ENCODE measurements at regions of chr4 and their contacts with region 1.

Region 1: DNA sequence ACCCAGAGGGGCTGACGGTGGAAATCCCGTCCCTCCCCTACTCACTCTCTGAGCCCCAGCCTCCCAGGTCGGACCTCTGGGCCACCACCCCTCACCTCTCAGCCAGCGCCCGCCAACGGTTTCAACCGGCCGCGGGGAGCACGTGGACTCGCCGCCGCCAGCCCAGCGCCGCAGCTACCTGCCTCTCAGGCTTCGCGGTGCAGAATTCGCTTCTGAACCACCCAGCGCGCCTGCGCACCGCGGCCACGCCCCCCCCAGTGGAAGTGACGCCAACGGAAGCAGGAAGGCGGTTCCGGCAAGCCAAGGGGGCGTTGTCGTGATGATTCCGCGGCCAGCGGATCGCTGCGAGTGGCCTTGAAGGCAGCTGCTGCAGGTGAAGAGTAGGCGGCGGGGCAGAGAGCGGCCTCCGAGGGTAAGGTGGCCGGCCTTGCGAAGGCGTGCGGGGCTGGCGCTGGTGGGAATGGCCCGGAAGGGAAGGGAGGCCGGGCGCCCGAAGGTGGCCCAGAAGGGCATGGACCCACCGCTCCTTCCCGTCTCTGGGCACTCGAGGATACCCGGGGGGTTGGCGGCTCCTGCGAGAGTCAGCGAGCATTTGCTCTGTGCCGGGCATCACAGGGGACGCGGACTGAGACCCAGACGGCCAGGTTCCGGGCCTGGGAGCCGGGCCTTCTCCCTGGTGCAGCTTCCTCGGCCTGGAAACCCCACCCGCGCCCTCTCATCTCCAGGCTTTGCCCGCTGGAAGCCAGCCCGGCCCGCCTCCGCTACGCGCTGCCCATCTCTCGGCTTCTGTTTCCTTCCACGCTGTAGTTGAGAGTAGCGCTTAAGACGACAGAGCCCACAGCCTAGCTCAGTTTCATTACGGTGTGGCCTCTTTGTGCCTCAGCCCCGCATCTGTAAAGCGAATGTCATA is at the starts of genes LYAR and ZBTB49:
- DNase-seq: peak; percentile 86
- ATAC-seq: peak; percentile 89
- H3K4me3 ChIP-seq: peak within 1 kb of the TSS; percentile 82 to 97 (median 88)
- H3K27ac ChIP-seq: peak within 1 kb of the TSS; percentile 72
- H3K4me1 ChIP-seq: peaks cover 51% of the 10 kb centered on the region
- H3K27me3 ChIP-seq: no peaks in the 10 kb centered on the region; a peak in 1 of 5 replicates
- CTCF ChIP-seq: peak; percentile 48
- EP300 ChIP-seq: no peak
- POLR2A ChIP-seq: peak; percentile 74 to 94; a peak in 3 of 4 replicates
- RAD21 ChIP-seq: 0 out of 2 replicates have a peak, but pooled peaks have one; percentile 44
- total RNA-seq, gene LYAR: 94.2 and 132 TPM in 2 replicates
- total RNA-seq, gene ZBTB49: 3.3 and 4.6 TPM in 2 replicates

Region 2: GRCh38 chr4:4327652-4328121 is 37.5 kb after region 1 on chr4:
- CTCF ChIA-PET with region 1: no interaction called
- POLR2A ChIA-PET with region 1: no interaction called
- in situ Hi-C with region 1: loop called (anchors 5 kb)
- intact Hi-C with region 1: no loop called
- DNase-seq: peak; percentile 62
- ATAC-seq: peak; percentile 97
- H3K4me3 ChIP-seq: peak overlapping the region; percentile 4 to 63 (median 44); a peak in 5 of 6 replicates
- H3K27ac ChIP-seq: no peak overlapping the region
- H3K4me1 ChIP-seq: peaks cover 47% of the 10 kb centered on the region
- H3K27me3 ChIP-seq: no peaks in the 10 kb centered on the region
- CTCF ChIP-seq: peak; percentile 91
- EP300 ChIP-seq: no peak
- POLR2A ChIP-seq: 0 out of 4 replicates have a peak, but pooled peaks of 1 of the 2 experiments have one; percentile 39
- RAD21 ChIP-seq: no peak; the same call in 1 of the 2 replicates

Region 3: GRCh38 chr4:4585012-4585670 is 294.9 kb after region 1 on chr4:
- CTCF ChIA-PET with region 1: no interaction called
- POLR2A ChIA-PET with region 1: no interaction called
- in situ Hi-C with region 1: no loop called
- intact Hi-C with region 1: no loop called
- DNase-seq: no peak
- ATAC-seq: no peak
- H3K4me3 ChIP-seq: no peak overlapping the region
- H3K27ac ChIP-seq: no peak overlapping the region
- H3K4me1 ChIP-seq: peaks cover 3% of the 10 kb centered on the region
- H3K27me3 ChIP-seq: no peaks in the 10 kb centered on the region
- CTCF ChIP-seq: no peak
- EP300 ChIP-seq: no peak
- POLR2A ChIP-seq: no peak
- RAD21 ChIP-seq: no peak

Measured in HepG2 (cell line).